Activated CD4-positive, alpha-beta memory T cell treated with anti-CD3 and anti-CD28 coated beads for 36 hours (primary cell): ENCODE measurements at regions of chr3 and their contacts with region 1.

Region 1: DNA sequence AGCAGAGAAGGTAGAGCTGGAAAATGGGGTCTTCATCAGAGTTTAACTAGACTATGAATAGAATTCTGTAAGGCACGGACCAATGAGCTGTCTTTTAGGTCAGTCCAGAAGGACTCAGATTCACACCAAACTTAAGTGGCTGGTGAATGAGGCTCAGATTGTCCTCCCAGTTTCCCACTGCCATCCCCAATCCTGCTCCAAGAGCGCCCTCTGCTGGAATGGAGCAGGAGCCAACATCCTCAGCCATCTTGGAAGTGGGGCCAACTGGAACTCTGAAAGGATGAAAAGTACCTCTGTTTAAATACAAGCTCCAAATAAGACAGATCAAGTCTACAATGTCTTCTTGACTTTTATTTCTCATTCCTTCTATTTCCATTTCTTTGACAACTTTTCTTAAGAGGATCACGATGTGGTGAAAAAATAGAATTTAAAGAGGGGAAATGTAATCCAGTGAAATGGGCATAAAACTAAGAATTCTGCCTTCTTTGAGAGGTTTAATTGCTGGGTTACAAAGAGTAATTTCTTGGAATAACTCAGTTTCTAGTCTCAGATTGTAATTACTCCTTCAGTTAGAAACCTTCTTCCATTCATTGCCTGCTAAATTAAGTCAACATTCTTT is 217.1 kb upstream of the TPRG1 start:
- DNase-seq: peak; percentile 85
- H3K4me3 Mint-ChIP-seq: no peak overlapping the region
- H3K27ac Mint-ChIP-seq: no peak overlapping the region
- H3K4me1 Mint-ChIP-seq: peaks cover 28% of the 10 kb centered on the region
- H3K27me3 Mint-ChIP-seq: peaks cover 4% of the 10 kb centered on the region

Region 2: DNA sequence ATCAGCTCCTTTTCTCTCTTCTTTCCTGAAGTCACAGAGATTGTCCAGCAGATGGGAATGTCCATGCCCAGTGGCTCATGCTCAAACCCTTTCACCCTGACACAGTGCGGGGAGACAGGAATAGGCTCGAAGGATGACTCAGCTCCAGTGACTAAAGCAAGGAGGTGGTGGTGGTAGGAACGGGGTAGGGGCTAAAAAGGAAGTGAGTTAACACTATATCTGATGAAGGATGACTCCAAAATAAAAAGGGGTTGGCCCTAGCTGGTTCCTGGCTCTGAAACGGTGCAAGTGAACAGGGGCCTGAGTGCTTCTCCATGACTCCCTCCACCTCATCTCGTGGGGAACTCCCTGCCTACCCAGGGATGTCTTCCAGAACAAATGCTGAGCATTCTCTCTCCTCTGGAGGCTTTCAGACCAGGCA is 968.2 kb before region 1 on chr3:
- CTCF ChIA-PET with region 1: interaction called, 7 read pairs
- POLR2A ChIA-PET with region 1: no interaction called
- intact Hi-C with region 1: loop called (anchors 5 kb)
- DNase-seq: peak; percentile 77
- H3K4me3 Mint-ChIP-seq: peak overlapping the region; percentile 2
- H3K27ac Mint-ChIP-seq: peak overlapping the region; percentile 83
- H3K4me1 Mint-ChIP-seq: peaks cover 56% of the 10 kb centered on the region
- H3K27me3 Mint-ChIP-seq: no peaks in the 10 kb centered on the region

Region 3: DNA sequence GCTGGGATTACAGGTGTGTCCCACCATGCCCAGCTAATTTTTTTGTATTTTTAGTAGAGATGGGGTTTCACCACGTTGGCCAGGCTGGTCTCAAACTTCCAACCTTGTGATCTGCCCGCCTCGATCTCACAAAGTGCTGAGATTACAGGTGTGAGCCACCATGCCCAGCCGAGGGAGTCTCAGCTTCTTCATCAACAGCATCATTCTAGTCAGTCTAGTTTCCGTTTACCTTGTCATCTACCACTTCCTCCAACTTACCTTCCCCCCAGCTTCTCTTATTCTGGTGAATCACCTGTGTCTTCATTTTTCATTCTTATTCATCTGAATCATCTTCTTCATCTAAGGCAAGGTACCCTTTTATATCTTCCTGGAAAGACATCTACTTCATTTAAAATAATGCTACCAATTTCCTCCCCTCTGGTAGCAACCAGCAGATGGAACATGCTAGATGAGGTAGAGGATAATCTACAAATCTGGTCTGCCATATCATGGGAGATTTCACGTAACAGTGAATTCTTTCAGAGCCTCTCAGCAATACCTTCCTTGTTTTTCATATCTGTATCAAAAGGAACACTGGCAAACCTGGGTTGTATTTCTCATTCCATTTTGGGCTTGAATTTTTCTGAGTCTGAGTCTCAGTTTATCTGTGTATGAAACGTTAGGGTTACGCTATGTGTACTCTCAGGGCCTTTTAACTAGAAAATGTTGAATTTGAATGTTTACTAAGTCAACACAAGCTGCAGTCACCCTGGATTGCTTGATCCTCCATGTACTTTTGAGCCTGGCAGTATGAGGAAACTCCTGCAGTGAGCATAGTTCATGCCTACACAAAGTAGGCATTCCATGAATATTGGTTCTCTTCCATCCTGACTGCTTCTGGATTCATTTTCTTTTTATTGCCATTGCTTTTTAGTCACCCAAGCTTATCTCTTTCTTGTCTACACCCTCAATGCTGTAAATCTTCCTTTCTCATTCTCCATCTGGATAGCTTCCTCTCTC is 783.9 kb before region 1 on chr3:
- CTCF ChIA-PET with region 1: interaction called, 7 read pairs
- POLR2A ChIA-PET with region 1: interaction called, 3 read pairs
- intact Hi-C with region 1: loop called (anchors 5 kb)
- DNase-seq: peak; percentile 82
- H3K4me3 Mint-ChIP-seq: peak overlapping the region; percentile 28
- H3K27ac Mint-ChIP-seq: peak overlapping the region; percentile 89
- H3K4me1 Mint-ChIP-seq: peaks cover 58% of the 10 kb centered on the region
- H3K27me3 Mint-ChIP-seq: no peaks in the 10 kb centered on the region

Region 4: GRCh38 chr3:188584162-188584529 is 370.6 kb before region 1 on chr3:
- CTCF ChIA-PET with region 1: interaction called, 7 read pairs
- POLR2A ChIA-PET with region 1: no interaction called
- intact Hi-C with region 1: loop called (anchors 5 kb)
- DNase-seq: peak; percentile 31
- H3K4me3 Mint-ChIP-seq: no peak overlapping the region
- H3K27ac Mint-ChIP-seq: no peak overlapping the region
- H3K4me1 Mint-ChIP-seq: peaks cover 13% of the 10 kb centered on the region
- H3K27me3 Mint-ChIP-seq: no peaks in the 10 kb centered on the region

Region 5: GRCh38 chr3:188749010-188749617 is 205.6 kb before region 1 on chr3:
- CTCF ChIA-PET with region 1: interaction called, 23 read pairs
- POLR2A ChIA-PET with region 1: no interaction called
- intact Hi-C with region 1: loop called (anchors 1 kb)
- DNase-seq: peak; percentile 56
- H3K4me3 Mint-ChIP-seq: no peak overlapping the region
- H3K27ac Mint-ChIP-seq: no peak overlapping the region
- H3K4me1 Mint-ChIP-seq: peaks cover 29% of the 10 kb centered on the region
- H3K27me3 Mint-ChIP-seq: no peaks in the 10 kb centered on the region

Region 6: DNA sequence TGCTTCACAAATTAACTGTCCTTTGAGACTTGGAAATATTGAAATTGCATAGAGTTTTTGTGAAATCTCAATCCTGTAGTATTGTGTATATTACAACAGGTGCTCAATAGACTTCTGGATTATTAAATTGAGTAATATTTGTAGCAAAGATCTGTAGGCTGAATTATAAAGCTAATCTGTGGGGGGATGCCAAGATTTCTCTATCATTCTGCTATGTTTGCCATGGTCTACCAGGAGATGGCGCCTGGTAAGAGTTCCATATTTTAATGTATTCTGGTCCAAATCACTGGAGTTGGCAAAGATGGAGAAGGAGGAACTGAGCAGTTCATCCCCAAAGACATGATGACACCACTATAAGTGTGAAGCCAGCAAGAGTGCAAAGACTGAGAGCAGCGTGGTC is 123.8 kb before region 1 on chr3:
- CTCF ChIA-PET with region 1: interaction called, 21 read pairs
- POLR2A ChIA-PET with region 1: no interaction called
- intact Hi-C with region 1: loop called (anchors 2 kb)
- DNase-seq: no peak
- H3K4me3 Mint-ChIP-seq: no peak overlapping the region
- H3K27ac Mint-ChIP-seq: no peak overlapping the region
- H3K4me1 Mint-ChIP-seq: peaks cover 31% of the 10 kb centered on the region
- H3K27me3 Mint-ChIP-seq: no peaks in the 10 kb centered on the region

Region 7: DNA sequence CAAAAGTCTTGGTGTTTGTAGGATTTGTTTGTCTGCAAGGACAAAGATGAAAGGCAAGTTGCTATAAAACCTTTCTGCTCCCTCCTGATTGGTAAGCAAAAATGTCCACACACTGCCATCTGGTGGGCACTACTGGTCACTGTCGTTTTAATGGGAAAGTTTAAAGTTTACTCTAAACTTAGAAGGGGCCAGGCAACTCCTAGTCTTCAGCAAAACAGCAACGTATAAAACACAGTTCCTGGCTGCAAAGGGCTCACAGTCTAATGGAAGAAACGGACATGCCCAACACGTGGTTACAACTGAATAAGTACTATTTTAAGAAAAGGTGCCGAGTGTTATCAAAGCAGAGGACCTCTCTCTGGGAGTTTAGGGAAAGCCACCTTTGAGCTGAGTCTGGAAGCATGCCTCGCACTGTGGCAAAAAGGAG is 193.4 kb after region 1 on chr3:
- CTCF ChIA-PET with region 1: interaction called, 10 read pairs
- POLR2A ChIA-PET with region 1: no interaction called
- intact Hi-C with region 1: loop called (anchors 2 kb)
- DNase-seq: peak; percentile 77
- H3K4me3 Mint-ChIP-seq: no peak overlapping the region
- H3K27ac Mint-ChIP-seq: no peak overlapping the region
- H3K4me1 Mint-ChIP-seq: peaks cover 19% of the 10 kb centered on the region
- H3K27me3 Mint-ChIP-seq: no peaks in the 10 kb centered on the region

Region 8: DNA sequence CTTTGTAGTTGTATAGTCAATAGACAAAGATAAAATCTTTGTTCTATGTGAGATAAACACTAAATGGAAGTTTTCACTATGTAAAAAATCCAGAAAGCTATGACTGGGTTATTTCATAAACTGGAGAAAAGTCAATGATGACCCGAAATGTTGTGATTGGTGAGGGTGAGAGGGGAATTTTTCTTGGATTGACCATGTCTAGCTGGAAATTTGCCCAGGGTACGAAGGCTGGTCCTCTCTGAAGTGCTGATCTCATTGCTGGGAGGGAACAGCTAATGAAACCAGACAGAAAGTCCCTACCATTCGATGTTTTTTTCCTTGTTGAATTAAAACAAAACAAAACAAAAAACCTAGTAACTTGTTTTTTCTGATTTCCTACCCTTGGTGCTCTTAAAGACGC is 231.4 kb after region 1 on chr3:
- CTCF ChIA-PET with region 1: no interaction called
- POLR2A ChIA-PET with region 1: no interaction called
- intact Hi-C with region 1: no loop called
- DNase-seq: no peak
- H3K4me3 Mint-ChIP-seq: no peak overlapping the region
- H3K27ac Mint-ChIP-seq: no peak overlapping the region
- H3K4me1 Mint-ChIP-seq: no peaks in the 10 kb centered on the region
- H3K27me3 Mint-ChIP-seq: no peaks in the 10 kb centered on the region